ENCODE measurements at regions of chr22 and their contacts with region 1.

Region 1: DNA sequence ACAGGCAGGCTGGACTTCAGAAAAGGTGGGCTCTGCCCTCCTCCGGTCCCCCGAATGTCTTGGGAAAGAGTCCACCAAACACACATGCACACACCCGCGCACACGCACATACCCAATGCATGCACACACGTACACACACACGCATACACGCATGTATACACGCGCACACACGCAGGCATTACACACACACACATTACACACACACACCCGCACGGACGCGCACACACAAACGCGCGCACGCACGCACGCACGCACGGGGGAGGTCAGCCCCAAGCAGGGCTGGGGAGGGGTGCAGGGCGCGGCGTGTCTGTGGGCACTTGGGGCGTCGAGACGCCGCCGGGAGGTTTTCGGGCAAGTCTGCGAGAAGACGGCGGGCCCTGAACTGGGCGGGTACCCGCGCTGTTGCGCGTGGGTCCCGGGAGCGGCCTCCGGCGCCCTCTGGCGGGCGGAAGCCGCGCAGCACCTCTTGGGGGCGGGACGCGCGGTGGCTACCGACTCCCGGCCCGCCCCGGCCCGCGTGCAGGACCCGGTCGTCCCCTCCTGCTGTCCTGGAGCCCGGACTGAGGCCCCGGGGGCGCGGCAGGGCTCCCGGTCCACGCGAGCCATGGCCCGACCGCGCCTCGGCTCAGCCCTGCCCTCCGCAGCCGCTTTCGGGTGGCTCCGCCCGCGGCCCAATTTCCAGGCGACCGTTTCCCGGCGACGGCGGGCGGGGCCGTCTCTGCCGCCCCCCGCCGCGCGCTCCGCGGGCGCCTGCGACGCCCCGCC is 3.6 kb downstream of the SEPTIN5 start:
- DNase-seq: peak; percentile 55
- H3K4me3 ChIP-seq: peak overlapping the region; percentile 32 to 61 (median 51)
- H3K27ac ChIP-seq: no peak overlapping the region
- H3K4me1 ChIP-seq: peaks cover 20% of the 10 kb centered on the region
- H3K27me3 ChIP-seq: no peaks in the 10 kb centered on the region
- CTCF ChIP-seq: peak; percentile 26 to 76

Region 2: DNA sequence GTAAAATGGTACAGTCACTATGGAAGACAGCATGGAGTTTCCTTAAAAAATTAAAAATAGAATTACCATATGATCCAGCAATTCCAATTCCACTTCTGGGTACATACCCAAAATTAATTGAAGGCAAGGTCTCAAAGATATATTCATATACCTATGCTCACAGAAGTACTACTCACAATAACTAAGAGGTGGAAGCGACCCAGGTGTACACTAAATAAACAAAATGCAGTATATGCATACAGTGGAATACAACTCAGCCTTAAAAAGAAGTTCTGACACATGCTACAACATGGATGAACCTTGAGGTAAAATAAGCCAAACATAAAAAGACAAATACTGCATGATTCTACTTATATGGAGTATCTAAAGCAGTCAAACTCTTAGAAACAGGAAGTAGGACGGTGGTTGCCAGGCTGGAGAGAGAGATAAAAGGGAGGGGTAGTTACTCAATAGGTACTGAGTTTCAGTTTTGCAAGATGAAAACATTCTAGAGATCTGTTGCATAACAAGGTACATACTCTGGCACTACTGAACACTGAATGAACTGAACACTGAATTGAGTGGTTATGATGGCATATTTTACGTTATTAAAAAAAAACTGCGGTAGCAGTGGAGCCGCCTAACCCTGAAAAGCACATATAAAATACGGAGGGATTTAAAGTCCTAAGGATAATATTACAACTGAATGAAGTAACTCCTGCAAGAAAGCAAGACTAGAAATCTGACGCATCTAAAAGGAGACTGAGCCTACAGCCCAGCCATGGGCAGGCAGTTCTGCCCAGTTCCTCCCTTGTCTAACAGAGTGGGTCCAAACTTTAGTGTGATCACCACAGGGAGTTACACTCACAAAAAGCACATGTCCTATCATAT is 608.4 kb before region 1 on chr22:
- CTCF ChIA-PET with region 1: no interaction called
- dilution Hi-C with region 1: no loop called
- in situ Hi-C with region 1: no loop called
- intact Hi-C with region 1: loop called (anchors 5 kb)
- DNase-seq: peak; percentile 88
- H3K4me3 ChIP-seq: peak overlapping the region in 1 of 3 experiments; percentile 4
- H3K27ac ChIP-seq: peak overlapping the region; percentile 88
- H3K4me1 ChIP-seq: peaks cover 20% of the 10 kb centered on the region
- H3K27me3 ChIP-seq: no peaks in the 10 kb centered on the region
- CTCF ChIP-seq: no peak

Region 3: GRCh38 chr22:19479357-19480172 is 238.3 kb before region 1 on chr22 and contains the start of gene CDC45:
- CTCF ChIA-PET with region 1: no interaction called
- dilution Hi-C with region 1: no loop called
- in situ Hi-C with region 1: no loop called
- intact Hi-C with region 1: loop called (anchors 5 kb)
- DNase-seq: peak; percentile 98
- H3K4me3 ChIP-seq: peak within 1 kb of the TSS; percentile 40 to 93 (median 91)
- H3K27ac ChIP-seq: peak within 1 kb of the TSS; percentile 100
- H3K4me1 ChIP-seq: peaks cover 30% of the 10 kb centered on the region
- H3K27me3 ChIP-seq: no peaks in the 10 kb centered on the region
- CTCF ChIP-seq: no peak
- total RNA-seq, gene CDC45: 2.2 to 31.1 TPM

Region 4: GRCh38 chr22:19663286-19663815 is 54.5 kb before region 1 on chr22:
- CTCF ChIA-PET with region 1: no interaction called
- dilution Hi-C with region 1: no loop called
- in situ Hi-C with region 1: no loop called
- intact Hi-C with region 1: loop called (anchors 10 kb)
- DNase-seq: peak; percentile 65
- H3K4me3 ChIP-seq: no peak overlapping the region
- H3K27ac ChIP-seq: no peak overlapping the region
- H3K4me1 ChIP-seq: peaks cover 13% of the 10 kb centered on the region
- H3K27me3 ChIP-seq: peaks cover 2% of the 10 kb centered on the region
- CTCF ChIP-seq: no peak